ENCODE measurements at regions of chr18 and their contacts with region 1.

Region 1: DNA sequence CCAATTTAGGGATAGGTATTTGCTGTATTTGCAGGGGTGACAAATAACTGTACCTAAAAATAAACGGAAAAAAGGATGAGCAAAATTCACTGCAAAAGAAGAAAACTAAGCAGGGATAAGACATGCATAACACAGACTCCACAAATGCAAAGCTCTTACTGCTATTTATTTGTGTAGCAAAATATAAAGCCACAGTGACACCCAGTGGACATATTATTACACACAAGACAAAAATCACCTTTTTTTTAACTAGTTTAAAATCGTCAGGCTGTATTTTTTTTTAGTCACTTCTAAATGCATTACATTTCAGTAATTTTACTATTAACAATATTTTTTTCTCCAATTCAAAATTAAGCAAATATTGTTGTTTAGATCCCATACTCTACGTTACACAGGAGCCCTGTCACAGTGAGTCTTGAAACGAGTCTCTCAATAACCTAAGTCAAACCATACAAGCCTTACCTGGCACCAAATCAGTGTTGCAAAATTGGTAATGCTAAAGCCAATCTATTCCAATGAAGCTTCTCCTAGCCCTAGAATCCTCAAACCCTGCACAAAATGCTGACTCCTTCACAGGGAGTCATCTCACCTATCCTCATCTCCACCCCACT is 23.7 kb downstream of the METTL4 start:
- DNase-seq: no peak
- ATAC-seq: no peak
- H3K4me3 ChIP-seq: no peak overlapping the region
- H3K27ac ChIP-seq: no peak overlapping the region
- H3K4me1 ChIP-seq: no peaks in the 10 kb centered on the region
- H3K27me3 ChIP-seq: no peaks in the 10 kb centered on the region
- CTCF ChIP-seq: peak in 4 of 5 experiments; percentile 22 to 54 (median 32)
- POLR2A ChIP-seq: no peak

Region 2: DNA sequence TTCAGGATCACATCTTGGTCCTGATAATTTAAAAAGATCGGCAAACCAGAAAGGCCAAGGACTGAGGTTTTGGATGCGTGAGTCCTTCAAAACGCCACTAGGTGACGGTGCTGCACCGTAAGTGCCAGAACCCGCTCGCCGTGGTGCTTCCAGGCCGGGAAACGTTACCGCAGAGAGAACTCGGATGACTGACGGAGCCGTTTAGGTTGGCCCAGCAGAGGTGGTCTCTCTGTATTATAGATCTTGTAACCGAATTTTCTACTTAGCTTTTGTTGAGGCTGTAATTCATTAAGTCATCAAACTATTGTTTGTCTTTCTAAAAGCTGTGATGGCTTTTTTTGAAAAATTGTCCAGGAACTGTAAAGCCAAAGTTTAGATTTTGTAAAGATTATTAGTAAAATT is 1682.7 kb before region 1 on chr18:
- in situ Hi-C with region 1: loop called in 2 of 4 experiments (anchors 25 kb)
- intact Hi-C with region 1: no loop called
- DNase-seq: peak; percentile 23 to 27
- ATAC-seq: no peak
- H3K4me3 ChIP-seq: no peak overlapping the region
- H3K27ac ChIP-seq: no peak overlapping the region
- H3K4me1 ChIP-seq: no peaks in the 10 kb centered on the region
- H3K27me3 ChIP-seq: no peaks in the 10 kb centered on the region
- CTCF ChIP-seq: peak; percentile 41 to 82 (median 66)
- POLR2A ChIP-seq: no peak

Region 3: GRCh38 chr18:2104620-2105462 is 442.7 kb before region 1 on chr18:
- in situ Hi-C with region 1: no loop called
- intact Hi-C with region 1: loop called (anchors 10 kb)
- DNase-seq: no peak
- ATAC-seq: no peak
- H3K4me3 ChIP-seq: no peak overlapping the region
- H3K27ac ChIP-seq: no peak overlapping the region
- H3K4me1 ChIP-seq: no peaks in the 10 kb centered on the region
- H3K27me3 ChIP-seq: no peaks in the 10 kb centered on the region
- CTCF ChIP-seq: peak in 4 of 5 experiments; percentile 16 to 38 (median 20)
- POLR2A ChIP-seq: no peak

Region 4: GRCh38 chr18:2337552-2338141 is 209.9 kb before region 1 on chr18:
- in situ Hi-C with region 1: loop called in 1 of 4 experiments (anchors 25 kb)
- intact Hi-C with region 1: loop called (anchors 5 kb)
- DNase-seq: no peak
- ATAC-seq: no peak
- H3K4me3 ChIP-seq: no peak overlapping the region
- H3K27ac ChIP-seq: no peak overlapping the region
- H3K4me1 ChIP-seq: no peaks in the 10 kb centered on the region
- H3K27me3 ChIP-seq: no peaks in the 10 kb centered on the region
- CTCF ChIP-seq: peak in 2 of 5 experiments; percentile 17 to 36
- POLR2A ChIP-seq: no peak

Region 5: GRCh38 chr18:2442791-2443398 is 104.7 kb before region 1 on chr18:
- in situ Hi-C with region 1: no loop called
- intact Hi-C with region 1: no loop called
- DNase-seq: no peak
- ATAC-seq: no peak
- H3K4me3 ChIP-seq: no peak overlapping the region
- H3K27ac ChIP-seq: no peak overlapping the region
- H3K4me1 ChIP-seq: no peaks in the 10 kb centered on the region
- H3K27me3 ChIP-seq: no peaks in the 10 kb centered on the region
- CTCF ChIP-seq: no peak
- POLR2A ChIP-seq: no peak

Region 6: GRCh38 chr18:2729757-2730156 is 182.2 kb after region 1 on chr18:
- in situ Hi-C with region 1: no loop called
- intact Hi-C with region 1: no loop called
- DNase-seq: no peak
- ATAC-seq: no peak
- H3K4me3 ChIP-seq: no peak overlapping the region
- H3K27ac ChIP-seq: no peak overlapping the region
- H3K4me1 ChIP-seq: no peaks in the 10 kb centered on the region
- H3K27me3 ChIP-seq: no peaks in the 10 kb centered on the region
- CTCF ChIP-seq: no peak
- POLR2A ChIP-seq: no peak